Naive thymus-derived CD4-positive, alpha-beta T cell (primary cell): ENCODE measurements at regions of chr4 and their contacts with region 1.

Region 1: GRCh38 chr4:153344131-153345010 is at the start of gene MND1:
- DNase-seq: peak; percentile 82 to 97 (median 92)
- ATAC-seq: peak; percentile 97
- H3K4me3 ChIP-seq: peak within 1 kb of the TSS; percentile 58
- H3K4me3 Mint-ChIP-seq: peak within 1 kb of the TSS; percentile 89 to 97 (median 94)
- H3K27ac ChIP-seq: peak within 1 kb of the TSS; percentile 60
- H3K27ac Mint-ChIP-seq: peak within 1 kb of the TSS; percentile 26 to 90 (median 76)
- H3K4me1 ChIP-seq: peaks cover 0 to 8% of the 10 kb centered on the region in 2 donors
- H3K4me1 Mint-ChIP-seq: peaks cover 4 to 43% (median 27%) of the 10 kb centered on the region in 7 donors
- H3K27me3 ChIP-seq: no peaks in the 10 kb centered on the region
- H3K27me3 Mint-ChIP-seq: peaks cover 0 to 23% (median 6%) of the 10 kb centered on the region in 5 donors
- total RNA-seq, gene MND1: 13.5 TPM in 1 of 5 experiments, not detected in the others

Region 2: DNA sequence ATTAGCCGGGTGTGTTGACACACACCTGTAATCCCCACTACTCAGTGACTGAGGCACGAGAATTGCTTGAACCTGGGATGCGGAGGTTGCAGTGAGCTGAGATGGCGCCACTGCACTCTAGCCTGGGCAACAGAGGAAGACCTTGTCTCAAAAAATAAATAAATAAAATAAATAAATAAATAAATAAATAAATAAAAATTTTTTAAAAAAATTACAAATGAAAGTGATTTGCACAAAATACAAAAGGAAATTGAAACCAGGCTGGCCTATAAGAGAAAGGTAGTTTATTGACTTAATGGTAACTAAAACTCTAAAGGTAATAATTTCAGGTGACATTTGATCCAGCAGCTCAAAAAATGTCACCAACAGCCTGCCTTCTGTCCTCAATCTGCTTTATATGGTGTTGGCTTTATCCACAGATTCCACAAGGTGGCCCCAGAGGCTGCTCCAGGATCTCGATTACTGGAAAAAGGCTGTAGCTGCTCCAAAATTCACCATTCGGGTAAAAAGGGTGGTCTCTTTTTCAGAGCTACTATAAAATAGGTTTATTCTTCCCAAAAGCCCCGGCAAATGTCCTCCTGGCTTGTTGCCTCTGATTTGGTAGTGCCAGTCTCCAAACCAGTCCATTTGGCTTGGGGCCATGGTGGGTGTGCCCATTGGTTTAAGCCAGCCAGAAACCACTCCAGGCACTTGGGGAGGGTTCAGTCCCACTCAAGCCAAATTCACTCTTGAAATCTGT is 201.5 kb before region 1 on chr4:
- CTCF ChIA-PET with region 1: interaction called, 4 read pairs
- POLR2A ChIA-PET with region 1: no interaction called
- intact Hi-C with region 1: loop called in 1 of 2 experiments (anchors 1 kb)
- DNase-seq: peak in 8 of 9 donors; percentile 39 to 71 (median 58)
- ATAC-seq: peak; percentile 76
- H3K4me3 ChIP-seq: no peak overlapping the region
- H3K4me3 Mint-ChIP-seq: no peak overlapping the region
- H3K27ac ChIP-seq: no peak overlapping the region
- H3K27ac Mint-ChIP-seq: no peak overlapping the region
- H3K4me1 ChIP-seq: no peaks in the 10 kb centered on the region
- H3K4me1 Mint-ChIP-seq: peaks cover 0 to 4% (median 0%) of the 10 kb centered on the region in 7 donors
- H3K27me3 ChIP-seq: no peaks in the 10 kb centered on the region
- H3K27me3 Mint-ChIP-seq: peaks cover 0 to 14% (median 0%) of the 10 kb centered on the region in 5 donors

Region 3: DNA sequence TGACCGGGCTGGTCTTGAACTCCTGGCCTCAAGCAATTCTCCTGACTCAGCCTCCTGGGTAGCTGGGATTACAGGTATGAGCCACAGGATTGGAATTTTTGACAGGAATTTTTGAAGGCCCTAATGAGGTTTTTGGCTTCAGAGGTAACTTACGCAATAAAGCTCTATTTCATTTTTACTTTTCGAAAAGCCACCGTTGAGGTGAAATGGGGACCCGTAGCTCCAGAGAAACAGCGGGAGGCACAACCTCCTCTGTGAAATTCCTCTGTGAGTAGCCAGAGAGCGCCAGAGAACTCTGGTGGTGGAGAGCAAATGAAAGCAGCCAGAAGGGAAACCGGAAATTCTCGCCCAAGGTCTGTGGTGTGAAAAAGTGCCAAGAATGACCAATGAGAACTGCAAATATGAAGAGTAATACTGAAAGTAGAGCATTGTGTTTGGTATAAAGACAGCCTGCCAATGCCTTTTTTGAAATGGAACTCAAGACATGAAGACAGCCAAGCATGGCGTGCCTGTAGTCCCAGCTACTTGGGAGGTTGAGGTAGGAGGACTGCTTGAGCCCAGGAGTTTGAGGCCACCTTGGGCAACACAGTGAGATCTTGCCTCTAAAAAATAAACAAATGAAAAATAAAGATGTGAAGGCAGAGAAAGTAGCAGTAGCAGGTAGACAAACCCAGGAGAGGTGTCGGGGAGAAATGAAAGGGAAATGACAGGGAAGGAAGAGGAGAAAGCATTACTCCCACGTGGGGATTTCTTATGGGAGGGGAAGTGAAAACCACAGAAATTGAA is 88.8 kb after region 1 on chr4:
- CTCF ChIA-PET with region 1: interaction called, 15 read pairs
- POLR2A ChIA-PET with region 1: interaction called, 13 read pairs
- intact Hi-C with region 1: loop called (anchors 1 kb)
- DNase-seq: peak; percentile 22 to 72 (median 59)
- ATAC-seq: peak; percentile 90
- H3K4me3 ChIP-seq: peak overlapping the region; percentile 65
- H3K4me3 Mint-ChIP-seq: peak overlapping the region; percentile 78 to 98 (median 87)
- H3K27ac ChIP-seq: peak overlapping the region; percentile 66
- H3K27ac Mint-ChIP-seq: peak overlapping the region; percentile 88 to 98 (median 96)
- H3K4me1 ChIP-seq: peaks cover 13 to 54% of the 10 kb centered on the region in 2 donors
- H3K4me1 Mint-ChIP-seq: peaks cover 31 to 83% (median 72%) of the 10 kb centered on the region in 7 donors
- H3K27me3 ChIP-seq: no peaks in the 10 kb centered on the region
- H3K27me3 Mint-ChIP-seq: no peaks in the 10 kb centered on the region

Region 4: GRCh38 chr4:153497988-153498967 is 153.9 kb after region 1 on chr4:
- CTCF ChIA-PET with region 1: interaction called, 4 read pairs
- POLR2A ChIA-PET with region 1: interaction called, 3 read pairs
- intact Hi-C with region 1: loop called in 1 of 2 experiments (anchors 1 kb)
- DNase-seq: peak in 4 of 9 donors; percentile 31 to 46 (median 44)
- ATAC-seq: peak; percentile 60
- H3K4me3 ChIP-seq: peak overlapping the region; percentile 20
- H3K4me3 Mint-ChIP-seq: peak overlapping the region; percentile 74 to 85 (median 80)
- H3K27ac ChIP-seq: peak overlapping the region; percentile 83
- H3K27ac Mint-ChIP-seq: peak overlapping the region; percentile 94 to 100 (median 98)
- H3K4me1 ChIP-seq: peaks cover 37 to 89% of the 10 kb centered on the region in 2 donors
- H3K4me1 Mint-ChIP-seq: peaks cover 72 to 99% (median 91%) of the 10 kb centered on the region in 7 donors
- H3K27me3 ChIP-seq: no peaks in the 10 kb centered on the region
- H3K27me3 Mint-ChIP-seq: no peaks in the 10 kb centered on the region

Region 5: DNA sequence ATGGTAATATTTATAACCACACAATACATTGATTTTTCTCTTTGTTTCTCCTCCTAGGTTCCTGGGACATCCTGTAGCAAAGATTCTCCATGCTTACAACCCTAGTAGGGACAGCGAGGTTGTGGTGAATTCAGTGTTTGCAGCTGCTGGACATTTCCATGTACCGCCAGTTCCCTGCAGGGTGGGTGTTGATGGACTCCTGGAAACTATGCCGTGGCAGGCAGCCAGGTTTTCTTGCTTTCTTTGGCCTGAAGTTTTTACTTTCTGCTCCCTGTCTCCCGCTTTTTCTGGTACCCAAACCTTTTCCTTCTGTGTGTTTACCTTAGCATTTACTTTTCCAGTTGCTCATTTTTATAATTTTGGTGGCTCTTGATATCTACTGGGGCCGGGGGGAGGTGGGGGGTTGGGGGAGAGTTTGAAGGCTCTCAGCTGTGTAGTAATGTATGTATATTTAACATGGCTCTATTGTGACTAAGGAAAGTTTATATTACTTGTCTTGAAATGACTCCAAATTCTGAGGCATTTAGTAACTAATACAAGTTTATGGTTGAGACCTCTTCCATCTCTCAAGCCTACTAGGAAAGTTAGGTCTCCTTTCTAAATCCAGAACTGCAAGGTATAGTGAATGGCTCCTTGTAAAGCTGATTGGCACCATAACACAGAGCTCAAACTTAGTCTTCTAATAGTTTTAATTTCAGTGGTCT is 211.5 kb after region 1 on chr4:
- CTCF ChIA-PET with region 1: no interaction called
- POLR2A ChIA-PET with region 1: no interaction called
- intact Hi-C with region 1: no loop called
- DNase-seq: no peak
- ATAC-seq: no peak
- H3K4me3 ChIP-seq: no peak overlapping the region
- H3K4me3 Mint-ChIP-seq: no peak overlapping the region
- H3K27ac ChIP-seq: no peak overlapping the region
- H3K27ac Mint-ChIP-seq: peak overlapping the region in 7 of 9 donors; percentile 8 to 84 (median 43)
- H3K4me1 ChIP-seq: no peaks in the 10 kb centered on the region
- H3K4me1 Mint-ChIP-seq: peaks cover 11 to 77% (median 61%) of the 10 kb centered on the region in 7 donors
- H3K27me3 ChIP-seq: no peaks in the 10 kb centered on the region
- H3K27me3 Mint-ChIP-seq: no peaks in the 10 kb centered on the region

Region 6: DNA sequence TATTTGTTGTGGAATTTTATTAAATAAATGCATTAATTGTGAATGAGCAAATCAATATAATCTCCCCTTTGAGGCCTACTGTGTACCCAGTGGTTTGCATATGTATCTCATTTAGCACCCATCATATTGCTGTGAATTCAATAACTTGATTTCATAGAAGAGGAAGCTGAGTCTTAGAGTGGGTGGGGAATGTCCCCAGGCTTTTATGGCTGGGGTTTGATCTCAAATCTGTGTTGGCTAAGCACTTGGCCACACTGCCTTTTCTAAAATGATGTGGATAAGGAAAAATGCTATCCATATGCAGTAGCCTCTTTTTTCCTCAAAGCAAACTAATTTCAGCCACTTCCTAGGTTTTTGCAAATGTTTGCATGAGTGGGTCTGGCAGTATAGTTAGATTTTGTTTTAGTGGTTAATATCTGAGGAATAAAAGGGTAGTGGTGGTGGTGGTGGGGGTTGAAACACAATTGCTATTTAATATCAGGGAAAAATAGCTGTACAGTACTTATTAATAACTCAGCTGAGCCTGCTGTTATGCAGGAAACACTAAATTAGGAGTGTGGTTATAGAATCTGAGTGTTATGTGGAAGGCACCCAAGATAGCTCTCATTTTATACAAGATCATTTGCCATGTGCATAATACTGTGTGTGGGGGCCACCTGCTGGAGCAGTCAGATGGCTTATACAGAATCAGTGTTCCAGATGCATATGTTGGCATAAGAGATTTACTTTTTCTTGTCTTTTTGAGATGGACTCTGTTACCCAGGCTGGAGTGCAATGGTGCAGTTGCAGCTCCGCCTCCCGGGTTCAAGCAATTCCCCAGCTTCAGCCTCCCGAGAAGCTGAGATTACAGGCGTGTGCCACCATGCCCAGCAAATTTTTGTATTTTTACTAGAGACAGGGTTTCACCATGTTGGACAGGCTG is 229.8 kb after region 1 on chr4:
- CTCF ChIA-PET with region 1: interaction called, 32 read pairs
- POLR2A ChIA-PET with region 1: interaction called, 7 read pairs
- intact Hi-C with region 1: loop called (anchors 1 kb)
- DNase-seq: peak; percentile 12 to 77 (median 69)
- ATAC-seq: peak; percentile 94
- H3K4me3 ChIP-seq: no peak overlapping the region
- H3K4me3 Mint-ChIP-seq: peak overlapping the region; percentile 7 to 61 (median 42)
- H3K27ac ChIP-seq: peak overlapping the region; percentile 11
- H3K27ac Mint-ChIP-seq: peak overlapping the region; percentile 30 to 85 (median 83)
- H3K4me1 ChIP-seq: peaks cover 12 to 36% of the 10 kb centered on the region in 2 donors
- H3K4me1 Mint-ChIP-seq: peaks cover 46 to 84% (median 74%) of the 10 kb centered on the region in 7 donors
- H3K27me3 ChIP-seq: no peaks in the 10 kb centered on the region
- H3K27me3 Mint-ChIP-seq: no peaks in the 10 kb centered on the region

Region 7: DNA sequence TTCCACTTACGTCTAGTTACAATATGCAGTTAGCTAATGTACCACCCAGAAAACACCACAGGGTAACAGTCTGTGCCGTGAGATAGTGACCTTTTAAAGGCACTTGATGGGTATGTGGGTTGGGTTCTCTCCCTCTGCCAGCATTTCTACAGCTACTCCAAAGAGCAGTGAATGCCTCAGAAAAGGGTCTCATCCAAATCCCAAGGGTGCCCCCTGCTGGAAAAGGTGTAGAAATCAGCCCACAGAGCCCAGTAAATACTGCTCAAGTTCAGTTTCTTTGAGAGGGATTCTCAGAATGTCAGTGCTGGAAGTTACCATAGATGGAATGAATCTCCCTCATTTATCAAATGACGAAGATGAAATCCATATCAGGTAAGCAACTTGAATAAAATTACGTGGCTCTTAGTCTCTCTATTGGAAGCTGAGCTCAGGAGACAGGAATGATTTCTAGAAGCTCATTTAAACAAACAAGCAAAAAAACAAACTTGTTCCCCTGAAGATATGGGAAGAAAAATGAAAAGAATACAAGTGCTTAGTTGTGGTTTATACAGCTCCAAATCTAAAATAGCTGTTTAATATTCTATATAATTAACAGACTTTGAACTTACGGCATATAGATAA is 405.9 kb after region 1 on chr4:
- CTCF ChIA-PET with region 1: interaction called, 11 read pairs
- POLR2A ChIA-PET with region 1: interaction called, 3 read pairs
- intact Hi-C with region 1: loop called (anchors 1 kb)
- DNase-seq: peak; percentile 37 to 78 (median 64)
- ATAC-seq: peak; percentile 82
- H3K4me3 ChIP-seq: no peak overlapping the region
- H3K4me3 Mint-ChIP-seq: no peak overlapping the region
- H3K27ac ChIP-seq: no peak overlapping the region
- H3K27ac Mint-ChIP-seq: peak overlapping the region in 2 of 9 donors; percentile 26 to 45
- H3K4me1 ChIP-seq: peaks cover 0 to 12% of the 10 kb centered on the region in 2 donors
- H3K4me1 Mint-ChIP-seq: peaks cover 4 to 31% (median 17%) of the 10 kb centered on the region in 7 donors
- H3K27me3 ChIP-seq: no peaks in the 10 kb centered on the region
- H3K27me3 Mint-ChIP-seq: peaks cover 0 to 32% (median 0%) of the 10 kb centered on the region in 5 donors